ENCODE measurements at regions of chr11 and their contacts with region 1.

Region 1: GRCh38 chr11:9681583-9682372 is 17.9 kb downstream of the SWAP70 start:
- DNase-seq: no peak
- H3K4me3 ChIP-seq: no peak overlapping the region
- H3K27ac ChIP-seq: no peak overlapping the region
- H3K4me1 ChIP-seq: no peaks in the 10 kb centered on the region
- H3K27me3 ChIP-seq: no peaks in the 10 kb centered on the region
- CTCF ChIP-seq: no peak

Region 2: DNA sequence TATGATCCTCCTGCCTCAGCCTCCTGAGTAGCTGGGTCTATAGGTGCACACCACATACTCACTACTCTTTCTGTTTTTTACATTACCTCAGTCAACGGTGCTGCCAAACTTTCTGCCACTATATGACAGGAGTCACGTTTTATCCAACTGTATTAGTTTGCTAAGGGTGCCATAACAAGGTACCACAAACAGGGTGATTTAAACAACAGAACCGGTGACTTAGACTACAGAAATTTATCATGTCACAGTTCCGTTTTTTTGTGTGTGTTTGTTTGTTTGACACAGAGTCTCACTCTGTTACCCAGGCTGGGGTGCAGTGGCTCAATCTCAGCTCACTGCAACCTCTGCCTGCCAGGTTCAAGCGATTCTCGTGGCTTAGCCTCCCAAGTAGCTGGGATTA is 24.2 kb before region 1 on chr11:
- CTCF ChIA-PET with region 1: no interaction called
- POLR2A ChIA-PET with region 1: interaction called, 10 read pairs
- intact Hi-C with region 1: no loop called
- DNase-seq: no peak
- H3K4me3 ChIP-seq: no peak overlapping the region
- H3K27ac ChIP-seq: no peak overlapping the region
- H3K4me1 ChIP-seq: no peaks in the 10 kb centered on the region; the same call in 1 of the 2 replicates
- H3K27me3 ChIP-seq: no peaks in the 10 kb centered on the region
- CTCF ChIP-seq: no peak

Region 3: DNA sequence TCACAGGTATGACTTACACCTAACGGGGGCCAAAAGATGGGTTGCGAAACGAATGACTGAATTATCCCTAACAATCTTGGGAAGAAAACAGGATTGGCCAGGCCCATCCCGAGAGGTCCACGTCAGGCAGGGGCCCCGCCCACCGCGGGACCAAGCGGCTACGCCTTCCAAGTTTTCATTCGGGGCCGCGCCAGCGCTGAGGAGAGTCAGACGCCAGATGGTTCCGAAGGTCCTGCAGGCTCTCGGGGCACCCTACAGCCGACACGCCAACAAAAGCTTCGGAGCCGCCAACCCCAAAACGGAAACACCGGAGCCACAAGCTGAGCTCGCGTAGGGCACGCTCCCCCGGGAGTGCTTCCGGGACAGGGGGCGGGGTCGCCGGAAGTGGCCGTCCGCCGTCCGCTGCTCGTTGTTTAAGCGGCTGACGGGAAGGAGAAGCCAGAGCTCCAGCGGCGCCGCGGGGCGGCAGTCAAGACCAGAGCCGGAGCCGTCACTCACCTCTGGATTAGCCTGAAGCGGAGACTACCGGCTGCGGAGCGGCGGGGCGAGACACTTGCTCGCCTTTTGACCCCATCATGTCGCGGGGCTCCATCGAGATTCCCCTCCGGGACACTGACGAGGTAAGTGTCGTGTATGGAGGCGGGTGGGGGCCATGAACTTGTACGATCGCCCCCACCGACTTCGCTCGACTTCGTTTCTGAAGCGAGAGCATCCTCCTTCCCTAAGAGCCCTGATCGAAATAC is 1069.2 kb after region 1 on chr11 and contains the start of gene CTR9:
- CTCF ChIA-PET with region 1: no interaction called
- POLR2A ChIA-PET with region 1: no interaction called
- intact Hi-C with region 1: no loop called
- DNase-seq: peak; percentile 81 to 91
- H3K4me3 ChIP-seq: peak within 1 kb of the TSS; percentile 81
- H3K27ac ChIP-seq: peak within 1 kb of the TSS; percentile 88
- H3K4me1 ChIP-seq: peaks cover 18% of the 10 kb centered on the region
- H3K27me3 ChIP-seq: no peaks in the 10 kb centered on the region
- CTCF ChIP-seq: no peak; the same call in 1 of the 2 replicates
- total RNA-seq, gene CTR9: 11.1 and 19.7 TPM in 2 replicates

Measured in PC-9 (cell line).